Heart right ventricle (tissue), 16 donors: ENCODE measurements at regions of chr7 and their contacts with region 1.

Region 1: GRCh38 chr7:37510043-37510634 is 61.5 kb upstream of the ELMO1 start:
- DNase-seq: no peak
- ATAC-seq: no peak
- H3K4me3 ChIP-seq: no peak overlapping the region
- H3K27ac ChIP-seq: no peak overlapping the region
- H3K4me1 ChIP-seq: peaks cover 0 to 28% (median 3%) of the 10 kb centered on the region in 9 donors
- H3K27me3 ChIP-seq: no peaks in the 10 kb centered on the region
- CTCF ChIP-seq: peak; percentile 48 to 79 (median 67)

Region 2: DNA sequence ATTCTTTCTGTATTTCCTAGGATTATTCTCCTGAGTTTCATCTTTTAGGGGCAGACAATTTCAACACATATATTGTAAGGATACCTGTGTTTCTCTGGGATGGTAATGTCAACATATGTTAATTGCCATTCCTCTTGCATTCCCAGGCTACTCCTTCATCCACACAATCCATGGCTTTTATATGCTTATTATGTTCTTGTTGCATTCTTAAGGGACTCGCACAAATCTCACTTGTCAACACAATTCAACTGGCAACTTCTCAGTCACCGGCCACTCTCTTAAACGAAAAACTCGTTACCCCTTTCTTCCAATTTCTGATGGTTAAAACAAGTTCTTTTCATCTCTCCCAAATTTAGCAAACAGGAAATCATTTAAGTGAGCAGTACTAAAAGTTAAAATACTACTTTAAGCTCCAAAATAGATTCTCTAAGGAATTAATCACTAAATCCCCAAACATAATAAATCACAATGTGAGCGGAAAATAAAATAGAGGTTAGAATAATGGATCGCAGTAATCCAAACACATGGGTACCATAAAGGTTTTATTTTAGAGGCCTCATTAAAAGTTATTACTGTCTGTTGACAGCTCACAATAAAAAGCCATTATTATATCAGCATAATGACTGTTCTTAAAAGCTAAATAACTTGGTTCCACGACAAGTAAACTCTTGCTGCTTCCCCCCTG is 284.7 kb before region 1 on chr7:
- intact Hi-C with region 1: loop called in 3 of 10 experiments (anchors 10 kb)
- DNase-seq: no peak
- ATAC-seq: no peak
- H3K4me3 ChIP-seq: no peak overlapping the region
- H3K27ac ChIP-seq: no peak overlapping the region
- H3K4me1 ChIP-seq: peaks cover 0 to 11% (median 0%) of the 10 kb centered on the region in 9 donors
- H3K27me3 ChIP-seq: no peaks in the 10 kb centered on the region
- CTCF ChIP-seq: no peak

Region 3: GRCh38 chr7:37284805-37285231 is 225.3 kb before region 1 on chr7:
- intact Hi-C with region 1: loop called in 1 of 10 experiments (anchors 5 kb)
- DNase-seq: peak; percentile 54 to 61
- ATAC-seq: peak in 6 of 8 donors; percentile 14 to 67 (median 52)
- H3K4me3 ChIP-seq: no peak overlapping the region
- H3K27ac ChIP-seq: peak overlapping the region in 7 of 10 donors; percentile 13 to 45 (median 19)
- H3K4me1 ChIP-seq: peaks cover 4 to 78% (median 56%) of the 10 kb centered on the region in 9 donors
- H3K27me3 ChIP-seq: no peaks in the 10 kb centered on the region
- CTCF ChIP-seq: peak; percentile 59 to 84 (median 77)

Region 4: DNA sequence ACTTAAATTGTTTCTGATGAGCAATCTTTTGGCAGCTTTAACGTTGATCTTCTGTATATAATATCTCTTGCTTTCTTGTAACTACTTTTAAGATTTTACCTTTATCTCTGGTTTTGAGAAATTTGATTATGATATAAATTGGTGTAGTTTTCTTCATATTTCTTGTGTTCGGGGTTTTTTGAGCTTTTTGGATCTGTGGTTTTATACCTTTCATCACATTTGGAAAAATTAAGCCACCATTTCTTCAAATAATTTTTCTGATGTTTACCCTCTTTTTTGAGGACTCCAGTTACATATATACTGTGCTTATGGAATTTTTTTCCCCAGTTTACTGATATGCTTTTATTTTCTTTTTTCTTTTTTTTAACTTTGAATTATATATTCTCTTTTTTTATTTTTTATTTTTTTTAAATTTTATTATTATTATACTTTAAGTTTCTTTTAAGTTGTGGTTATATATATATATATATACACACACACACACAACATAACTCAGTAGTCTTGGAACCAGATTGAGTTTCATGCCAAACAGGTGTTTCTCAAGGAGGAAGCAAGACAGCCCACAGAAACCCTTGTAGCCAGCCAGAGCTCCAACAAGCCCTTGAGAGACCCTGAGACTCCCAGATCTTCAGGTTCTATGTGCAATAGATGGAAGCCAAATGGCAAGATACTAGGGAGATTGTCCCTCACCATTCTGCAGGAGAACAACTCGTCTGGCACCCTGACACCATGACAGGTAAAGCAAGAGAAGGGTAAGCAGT is 310.7 kb after region 1 on chr7:
- intact Hi-C with region 1: loop called in 1 of 10 experiments (anchors 10 kb)
- DNase-seq: no peak
- ATAC-seq: no peak
- H3K4me3 ChIP-seq: no peak overlapping the region
- H3K27ac ChIP-seq: no peak overlapping the region
- H3K4me1 ChIP-seq: no peaks in the 10 kb centered on the region
- H3K27me3 ChIP-seq: no peaks in the 10 kb centered on the region
- CTCF ChIP-seq: no peak

Region 5: DNA sequence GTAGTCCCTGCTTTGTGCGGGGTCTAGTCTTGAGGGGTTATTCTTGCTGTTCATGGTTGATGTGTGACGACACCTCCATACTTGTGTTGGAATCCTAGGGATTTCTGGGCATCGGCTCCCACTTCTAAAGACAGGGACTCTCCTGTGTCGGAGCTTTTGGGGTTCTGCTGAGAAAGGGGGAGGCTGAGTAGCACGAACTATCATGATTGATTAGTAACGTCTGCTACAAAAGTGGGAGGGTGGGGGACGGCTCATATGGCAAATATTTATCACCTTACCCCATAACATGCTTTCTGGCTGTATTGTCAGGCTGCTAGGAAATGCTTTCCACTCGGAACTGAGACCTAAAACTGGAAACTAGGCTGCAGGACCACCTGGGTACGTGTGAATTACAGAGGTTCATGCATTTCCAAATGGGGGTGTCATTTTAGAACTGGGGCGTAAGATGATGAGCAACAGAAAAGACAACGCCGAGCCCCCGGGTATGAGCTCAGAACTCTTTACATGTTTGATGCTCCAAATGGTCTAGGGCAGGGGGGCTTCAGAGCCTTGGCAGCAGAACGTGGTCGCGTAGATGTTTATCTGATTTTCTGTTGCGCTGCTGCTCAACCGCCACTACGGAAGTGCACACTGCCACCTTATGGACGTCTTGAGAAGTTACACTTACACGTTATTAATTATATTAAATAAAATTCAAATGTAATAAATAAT is 323.1 kb after region 1 on chr7:
- intact Hi-C with region 1: loop called in 4 of 10 experiments (anchors 5 to 10 kb)
- DNase-seq: peak; percentile 17 to 19
- ATAC-seq: peak in 3 of 8 donors; percentile 33 to 61 (median 40)
- H3K4me3 ChIP-seq: peak overlapping the region in 7 of 10 donors; percentile 7 to 48 (median 40)
- H3K27ac ChIP-seq: no peak overlapping the region
- H3K4me1 ChIP-seq: peaks cover 0 to 18% (median 5%) of the 10 kb centered on the region in 9 donors
- H3K27me3 ChIP-seq: peaks cover 0 to 7% (median 0%) of the 10 kb centered on the region in 7 donors
- CTCF ChIP-seq: peak; percentile 66 to 86 (median 76)

Region 6: DNA sequence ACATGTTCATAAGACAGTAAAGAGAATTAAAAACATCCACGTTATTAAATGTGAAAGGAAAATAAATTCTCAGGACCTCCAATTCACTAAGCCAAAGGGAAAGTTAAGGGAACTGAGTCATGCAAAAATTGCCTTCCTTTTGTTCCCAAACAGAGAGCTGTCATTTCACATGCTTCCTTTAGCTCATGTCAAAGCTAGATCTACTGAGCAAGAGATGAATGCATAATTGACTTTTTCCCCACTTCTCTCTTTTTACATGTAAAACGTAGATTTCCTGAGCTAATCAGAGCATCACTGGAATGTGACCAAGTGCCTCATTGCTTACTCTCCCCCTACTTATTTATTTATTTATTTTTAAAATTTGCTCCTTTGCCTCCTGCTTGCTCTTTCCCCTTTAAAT is 1250.1 kb after region 1 on chr7:
- intact Hi-C with region 1: no loop called
- DNase-seq: no peak
- ATAC-seq: no peak
- H3K4me3 ChIP-seq: no peak overlapping the region
- H3K27ac ChIP-seq: no peak overlapping the region
- H3K4me1 ChIP-seq: no peaks in the 10 kb centered on the region
- H3K27me3 ChIP-seq: no peaks in the 10 kb centered on the region
- CTCF ChIP-seq: no peak